ENCODE measurements at regions of chr16 and their contacts with region 1.

Region 1: GRCh38 chr16:53014287-53014686 is 38.4 kb downstream of the CHD9NB start:
- DNase-seq: no peak
- ATAC-seq: no peak
- H3K4me3 ChIP-seq: no peak overlapping the region
- H3K27ac ChIP-seq: no peak overlapping the region
- H3K4me1 ChIP-seq: no peaks in the 10 kb centered on the region
- H3K27me3 ChIP-seq: no peaks in the 10 kb centered on the region
- CTCF ChIP-seq: no peak
- POLR2A ChIP-seq: no peak
- RAD21 ChIP-seq: no peak

Region 2: DNA sequence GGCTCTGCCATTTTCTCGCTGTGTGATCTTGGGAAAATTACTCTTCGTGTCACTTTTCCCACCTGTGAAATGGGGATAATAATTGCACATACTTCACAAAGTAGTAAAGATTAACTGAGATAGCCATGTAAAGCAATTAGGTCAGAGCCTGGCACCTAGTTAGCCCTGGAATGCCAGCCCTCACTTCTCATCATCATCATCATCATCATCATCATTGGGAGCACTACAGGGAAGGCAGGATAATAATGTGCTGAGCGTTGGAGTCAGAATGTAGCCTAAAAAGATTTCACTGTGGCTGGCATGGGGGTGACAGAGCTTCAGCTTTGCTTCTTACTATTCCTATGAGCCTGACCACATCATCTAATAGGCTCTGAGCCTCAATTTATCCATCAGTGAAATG is 830.0 kb before region 1 on chr16:
- CTCF ChIA-PET with region 1: no interaction called
- POLR2A ChIA-PET with region 1: no interaction called
- dilution Hi-C with region 1: no loop called
- in situ Hi-C with region 1: loop called (anchors 10 kb)
- intact Hi-C with region 1: no loop called
- DNase-seq: no peak
- ATAC-seq: no peak
- H3K4me3 ChIP-seq: no peak overlapping the region
- H3K27ac ChIP-seq: no peak overlapping the region
- H3K4me1 ChIP-seq: no peaks in the 10 kb centered on the region
- H3K27me3 ChIP-seq: no peaks in the 10 kb centered on the region
- CTCF ChIP-seq: no peak
- POLR2A ChIP-seq: no peak
- RAD21 ChIP-seq: no peak

Region 3: DNA sequence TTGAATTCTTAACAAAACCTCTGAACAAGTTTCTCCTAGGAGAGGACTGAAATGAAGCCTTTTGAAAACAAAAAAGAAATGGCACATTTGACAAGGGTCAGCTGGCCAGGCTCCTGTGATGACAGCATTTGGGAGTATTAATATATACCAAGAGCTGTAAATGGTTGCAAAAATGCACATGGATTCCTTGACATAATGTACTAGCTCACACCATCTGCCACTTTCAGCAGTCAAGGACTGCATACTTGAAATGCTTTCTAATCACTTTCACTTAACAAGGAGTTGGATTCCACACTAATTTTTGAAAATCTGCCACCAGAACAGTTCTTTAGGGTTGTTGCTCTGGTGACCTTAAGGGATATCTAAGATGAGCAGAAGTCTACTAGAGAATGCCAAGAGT is 230.7 kb before region 1 on chr16:
- CTCF ChIA-PET with region 1: no interaction called
- POLR2A ChIA-PET with region 1: no interaction called
- dilution Hi-C with region 1: no loop called
- in situ Hi-C with region 1: no loop called
- intact Hi-C with region 1: no loop called
- DNase-seq: no peak
- ATAC-seq: no peak
- H3K4me3 ChIP-seq: no peak overlapping the region
- H3K27ac ChIP-seq: no peak overlapping the region
- H3K4me1 ChIP-seq: no peaks in the 10 kb centered on the region
- H3K27me3 ChIP-seq: no peaks in the 10 kb centered on the region
- CTCF ChIP-seq: no peak
- POLR2A ChIP-seq: no peak
- RAD21 ChIP-seq: no peak

Measured in IMR-90 (cell line).